ENCODE measurements at regions of chr11 and their contacts with region 1.

Region 1: DNA sequence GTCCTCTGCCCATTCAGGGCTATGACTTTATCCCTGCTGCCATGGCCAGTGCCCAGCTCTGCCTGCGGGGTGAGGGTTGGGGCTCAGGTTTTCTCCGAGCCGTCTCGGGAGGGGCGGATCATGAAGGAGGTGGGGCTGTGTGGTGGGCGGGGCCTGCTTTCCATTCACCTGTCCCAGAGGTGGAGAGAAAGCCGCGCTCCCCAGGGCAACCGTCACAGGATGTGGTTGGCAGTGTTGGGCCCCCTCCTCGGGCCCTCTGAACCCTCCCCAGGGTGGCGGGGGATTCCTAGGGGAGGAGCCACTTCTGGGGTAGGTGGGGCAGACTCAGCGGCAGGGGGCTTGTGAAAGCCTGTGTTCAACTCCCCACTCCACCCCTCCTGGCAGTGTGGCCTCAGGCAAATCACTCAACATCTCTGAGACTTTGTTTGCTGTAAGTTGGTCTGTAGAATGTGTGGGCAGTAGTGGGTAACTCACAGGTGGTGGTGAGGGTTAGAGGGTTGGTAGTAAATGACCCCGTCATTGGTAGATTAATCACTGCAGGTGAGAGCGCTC is 50.3 kb downstream of the CD6 start:
- DNase-seq: peak; percentile 97
- H3K4me3 Mint-ChIP-seq: peak overlapping the region; percentile 81
- H3K27ac Mint-ChIP-seq: peak overlapping the region; percentile 100
- H3K4me1 Mint-ChIP-seq: peaks cover 78% of the 10 kb centered on the region
- H3K27me3 Mint-ChIP-seq: no peaks in the 10 kb centered on the region

Region 2: DNA sequence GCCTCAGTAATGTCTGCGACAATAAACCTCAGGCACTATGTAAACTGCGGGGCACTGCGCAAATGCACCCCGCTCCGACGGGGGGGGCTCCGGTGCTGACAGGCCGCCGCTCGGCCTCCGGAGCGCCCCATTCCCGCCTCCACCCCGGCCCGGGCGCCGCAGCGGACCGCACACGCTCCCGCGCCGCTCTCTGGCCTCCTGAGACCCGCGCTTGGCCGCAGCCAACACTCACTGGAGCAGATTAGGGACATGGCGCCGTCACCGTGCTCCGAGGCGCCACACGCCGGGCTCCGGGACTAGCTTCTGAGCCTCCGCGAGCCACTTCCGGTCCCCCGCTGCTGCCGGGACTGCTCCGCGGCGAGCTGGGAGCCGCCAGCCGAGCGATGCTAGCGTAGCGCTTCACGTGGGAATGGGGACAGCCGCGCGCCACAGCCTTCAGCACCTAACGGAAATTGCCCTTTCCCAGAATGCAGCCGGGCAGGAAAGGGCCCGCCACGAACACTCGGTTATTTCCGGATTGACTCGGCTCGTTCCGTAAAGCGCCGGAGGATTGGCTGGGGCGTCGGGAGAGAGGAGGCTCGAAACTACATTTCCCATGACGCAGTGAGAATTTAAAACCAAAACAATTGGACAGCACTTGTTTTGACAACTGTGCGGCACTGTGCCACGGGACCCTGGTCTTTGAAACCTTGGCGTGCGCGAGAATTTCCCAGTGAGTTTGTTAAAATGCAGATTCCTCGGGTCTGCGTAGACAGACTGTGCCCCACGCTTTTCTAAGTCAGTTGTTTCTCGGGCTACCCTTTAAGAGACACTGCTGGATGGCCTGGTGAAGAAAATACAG is 115.4 kb before region 1 on chr11 and contains the start of gene PRPF19:
- CTCF ChIA-PET with region 1: no interaction called
- intact Hi-C with region 1: no loop called
- DNase-seq: peak; percentile 100
- H3K4me3 Mint-ChIP-seq: peak within 1 kb of the TSS; percentile 80
- H3K27ac Mint-ChIP-seq: peak within 1 kb of the TSS; percentile 92
- H3K4me1 Mint-ChIP-seq: peaks cover 40% of the 10 kb centered on the region
- H3K27me3 Mint-ChIP-seq: no peaks in the 10 kb centered on the region
- total RNA-seq, gene PRPF19: 108 to 119 TPM

Region 3: DNA sequence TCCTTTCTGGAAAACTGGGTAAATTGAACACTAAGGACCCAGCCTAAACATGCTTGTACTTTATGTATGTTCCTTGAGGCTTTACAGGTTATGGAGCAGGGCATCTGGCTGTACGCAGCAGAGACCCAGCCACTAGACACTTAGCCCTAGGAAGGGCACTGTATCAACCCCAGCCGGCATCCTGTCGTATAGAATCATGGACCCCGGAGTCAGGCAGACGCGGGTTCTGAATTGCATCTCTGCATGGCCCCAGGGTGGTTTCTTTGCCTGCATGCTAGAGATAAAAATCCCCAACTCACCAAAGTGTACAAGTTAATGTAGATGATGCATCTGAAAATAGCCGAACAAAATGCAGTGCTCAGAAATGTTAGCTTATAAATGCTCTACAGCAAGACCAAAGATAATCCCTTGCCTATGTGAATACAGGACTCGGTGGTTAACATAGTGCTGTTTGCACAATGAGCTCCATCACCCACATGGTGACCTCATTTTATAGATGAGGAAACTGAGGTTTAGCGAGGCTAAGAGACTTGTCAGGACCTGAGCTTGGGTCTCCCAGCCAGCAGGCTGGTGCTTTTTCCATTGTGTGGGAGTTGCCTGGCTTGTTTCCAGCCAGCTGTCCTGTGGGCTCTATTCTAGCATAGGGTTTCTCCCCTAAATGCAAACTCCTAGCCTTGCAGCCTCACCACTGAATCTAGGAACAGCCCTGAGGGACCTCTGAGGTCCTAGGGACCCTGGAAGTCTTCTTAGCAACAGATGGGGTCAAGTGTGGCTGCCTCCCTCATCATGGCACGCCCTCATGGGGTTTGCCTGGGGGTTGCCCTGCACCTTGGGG is 43.0 kb before region 1 on chr11:
- CTCF ChIA-PET with region 1: interaction called, 3 read pairs
- intact Hi-C with region 1: loop called (anchors 2 kb)
- DNase-seq: peak; percentile 92
- H3K4me3 Mint-ChIP-seq: peak overlapping the region; percentile 72
- H3K27ac Mint-ChIP-seq: peak overlapping the region; percentile 97
- H3K4me1 Mint-ChIP-seq: peaks cover 76% of the 10 kb centered on the region
- H3K27me3 Mint-ChIP-seq: no peaks in the 10 kb centered on the region

Region 4: GRCh38 chr11:61004180-61004611 is 17.5 kb before region 1 on chr11:
- CTCF ChIA-PET with region 1: interaction called, 7 read pairs
- intact Hi-C with region 1: loop called (anchors 1 kb)
- DNase-seq: peak; percentile 78
- H3K4me3 Mint-ChIP-seq: peak overlapping the region; percentile 66
- H3K27ac Mint-ChIP-seq: peak overlapping the region; percentile 95
- H3K4me1 Mint-ChIP-seq: peaks cover 91% of the 10 kb centered on the region
- H3K27me3 Mint-ChIP-seq: no peaks in the 10 kb centered on the region

Region 5: DNA sequence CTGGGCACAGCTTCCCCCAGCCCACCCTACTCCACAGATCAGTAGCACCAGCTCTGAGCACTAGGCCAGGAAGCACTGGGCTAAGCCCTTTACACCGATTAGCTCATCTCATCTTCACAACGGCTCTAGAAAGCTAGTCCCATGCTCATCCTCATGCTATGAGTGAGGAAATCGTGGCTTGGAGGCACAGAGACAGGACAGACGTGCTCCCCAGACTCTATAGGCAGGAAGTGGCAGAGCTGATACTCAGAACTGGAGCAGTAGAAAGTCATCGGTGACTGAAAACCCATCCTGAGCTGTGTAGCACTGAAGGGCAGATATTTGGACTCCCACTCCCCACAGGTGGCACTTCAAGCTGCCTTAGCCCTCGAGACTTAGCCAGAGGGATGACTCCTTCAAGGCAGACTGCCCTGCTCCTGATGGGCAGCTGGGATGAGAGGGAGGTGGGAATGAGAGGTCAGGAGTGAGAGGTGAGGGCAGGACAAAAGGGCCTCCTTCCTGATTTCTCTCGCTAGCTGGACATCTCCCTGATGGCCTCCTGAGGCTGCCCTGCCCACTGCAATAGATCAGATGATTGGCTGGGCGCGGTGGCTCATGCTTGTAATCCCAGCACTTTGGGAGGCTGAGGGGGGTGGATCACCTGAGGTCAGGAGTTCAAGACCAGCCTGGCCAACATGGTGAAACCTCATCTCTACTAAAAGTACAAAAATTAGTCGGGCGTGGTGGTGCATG is 90.2 kb after region 1 on chr11:
- CTCF ChIA-PET with region 1: no interaction called
- intact Hi-C with region 1: loop called (anchors 1 kb)
- DNase-seq: peak; percentile 91
- H3K4me3 Mint-ChIP-seq: peak overlapping the region; percentile 71
- H3K27ac Mint-ChIP-seq: no peak overlapping the region
- H3K4me1 Mint-ChIP-seq: peaks cover 99% of the 10 kb centered on the region
- H3K27me3 Mint-ChIP-seq: no peaks in the 10 kb centered on the region